ENCODE measurements at regions of chr18 and their contacts with region 1.

Region 1: GRCh38 chr18:32271672-32272208 is 81.9 kb downstream of the MEP1B start:
- DNase-seq: peak; percentile 38
- H3K4me3 ChIP-seq: no peak overlapping the region
- H3K27ac ChIP-seq: no peak overlapping the region
- H3K4me1 ChIP-seq: no peaks in the 10 kb centered on the region
- H3K27me3 ChIP-seq: peaks cover 0 to 1% of the 10 kb centered on the region in 2 experiments
- CTCF ChIP-seq: peak; percentile 43 to 62
- POLR2A ChIP-seq: no peak

Region 2: GRCh38 chr18:32158108-32158624 is 113.6 kb before region 1 on chr18:
- CTCF ChIA-PET with region 1: interaction called, 25 read pairs
- POLR2A ChIA-PET with region 1: no interaction called
- dilution Hi-C with region 1: no loop called
- intact Hi-C with region 1: loop called (anchors 1 kb)
- DNase-seq: peak; percentile 83
- H3K4me3 ChIP-seq: no peak overlapping the region
- H3K27ac ChIP-seq: no peak overlapping the region
- H3K4me1 ChIP-seq: no peaks in the 10 kb centered on the region
- H3K27me3 ChIP-seq: peaks cover 0 to 4% of the 10 kb centered on the region in 2 experiments
- CTCF ChIP-seq: peak; percentile 78 to 85
- POLR2A ChIP-seq: no peak

Region 3: GRCh38 chr18:32289483-32290075 is 17.8 kb after region 1 on chr18:
- CTCF ChIA-PET with region 1: interaction called, 15 read pairs
- POLR2A ChIA-PET with region 1: no interaction called
- dilution Hi-C with region 1: no loop called
- intact Hi-C with region 1: no loop called
- DNase-seq: peak; percentile 77
- H3K4me3 ChIP-seq: no peak overlapping the region
- H3K27ac ChIP-seq: no peak overlapping the region
- H3K4me1 ChIP-seq: no peaks in the 10 kb centered on the region
- H3K27me3 ChIP-seq: peaks cover 2 to 8% of the 10 kb centered on the region in 2 experiments
- CTCF ChIP-seq: peak; percentile 66 to 74
- POLR2A ChIP-seq: no peak

Region 4: GRCh38 chr18:32308493-32309120 is 36.9 kb after region 1 on chr18:
- CTCF ChIA-PET with region 1: interaction called, 10 read pairs
- POLR2A ChIA-PET with region 1: no interaction called
- dilution Hi-C with region 1: no loop called
- intact Hi-C with region 1: no loop called
- DNase-seq: peak; percentile 81
- H3K4me3 ChIP-seq: no peak overlapping the region
- H3K27ac ChIP-seq: no peak overlapping the region
- H3K4me1 ChIP-seq: peaks cover 7% of the 10 kb centered on the region
- H3K27me3 ChIP-seq: peaks cover 0 to 2% of the 10 kb centered on the region in 2 experiments
- CTCF ChIP-seq: no peak
- POLR2A ChIP-seq: no peak

Region 5: GRCh38 chr18:32545631-32546030 is 273.9 kb after region 1 on chr18:
- CTCF ChIA-PET with region 1: interaction called, 288 read pairs
- POLR2A ChIA-PET with region 1: no interaction called
- dilution Hi-C with region 1: no loop called
- intact Hi-C with region 1: loop called (anchors 1 kb)
- DNase-seq: no peak
- H3K4me3 ChIP-seq: no peak overlapping the region
- H3K27ac ChIP-seq: no peak overlapping the region
- H3K4me1 ChIP-seq: no peaks in the 10 kb centered on the region
- H3K27me3 ChIP-seq: peaks cover 1 to 4% of the 10 kb centered on the region in 2 experiments
- CTCF ChIP-seq: no peak
- POLR2A ChIP-seq: no peak

Region 6: DNA sequence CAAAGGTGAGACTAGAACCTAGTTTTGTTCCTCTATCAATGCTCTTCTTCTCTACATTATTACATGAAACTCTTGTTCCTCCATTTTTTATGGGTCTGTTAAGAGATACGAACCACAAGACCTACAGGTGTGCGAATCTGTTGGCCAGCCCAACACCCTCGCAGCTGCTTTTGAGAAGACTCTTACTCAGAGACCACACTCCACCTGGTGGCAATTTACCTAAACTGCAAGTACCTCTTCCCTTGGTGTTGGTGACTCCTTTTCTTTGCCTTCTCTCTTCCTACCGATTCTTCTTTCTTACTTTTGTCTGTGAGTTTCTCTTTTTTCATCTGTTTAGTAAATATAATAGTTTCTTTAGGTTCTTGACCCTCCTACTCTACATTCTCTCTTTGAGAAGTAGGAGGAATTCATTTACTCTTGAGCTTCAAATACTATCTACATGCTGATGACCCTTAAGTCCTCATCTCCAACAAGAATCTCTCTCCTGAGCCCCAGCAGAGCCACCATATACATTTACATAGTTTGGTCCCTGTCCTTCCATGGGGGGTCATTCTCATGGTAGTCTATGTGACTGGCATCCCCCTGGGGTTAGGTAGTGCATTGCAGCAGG is 280.8 kb after region 1 on chr18:
- CTCF ChIA-PET with region 1: interaction called, 288 read pairs
- POLR2A ChIA-PET with region 1: no interaction called
- dilution Hi-C with region 1: no loop called
- intact Hi-C with region 1: loop called (anchors 1 kb)
- DNase-seq: peak; percentile 62
- H3K4me3 ChIP-seq: no peak overlapping the region
- H3K27ac ChIP-seq: no peak overlapping the region
- H3K4me1 ChIP-seq: no peaks in the 10 kb centered on the region
- H3K27me3 ChIP-seq: peaks cover 2 to 5% of the 10 kb centered on the region in 2 experiments
- CTCF ChIP-seq: peak; percentile 53 to 77
- POLR2A ChIP-seq: no peak

Region 7: DNA sequence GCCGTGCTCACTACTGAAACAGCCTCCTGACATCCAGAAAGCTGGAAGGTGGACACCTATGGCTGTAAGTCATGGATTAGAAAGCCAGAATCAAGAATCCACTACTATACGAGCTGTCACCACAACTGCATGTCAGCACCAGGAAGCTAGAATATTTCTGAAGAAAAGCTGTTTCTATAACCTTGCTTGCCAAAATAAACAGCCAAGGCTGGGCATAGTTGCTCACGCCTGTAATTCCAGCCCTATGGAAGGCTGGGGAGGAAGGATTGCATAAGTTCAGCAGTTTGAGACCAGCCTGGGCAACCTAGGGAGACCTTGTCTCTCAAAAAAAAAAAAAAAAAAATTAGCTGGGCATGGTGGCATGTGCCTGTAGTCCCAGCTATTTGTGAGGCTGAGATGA is 295.2 kb after region 1 on chr18:
- CTCF ChIA-PET with region 1: interaction called, 10 read pairs
- POLR2A ChIA-PET with region 1: no interaction called
- dilution Hi-C with region 1: no loop called
- intact Hi-C with region 1: no loop called
- DNase-seq: no peak
- H3K4me3 ChIP-seq: no peak overlapping the region
- H3K27ac ChIP-seq: no peak overlapping the region
- H3K4me1 ChIP-seq: no peaks in the 10 kb centered on the region
- H3K27me3 ChIP-seq: no peaks in the 10 kb centered on the region
- CTCF ChIP-seq: no peak
- POLR2A ChIP-seq: no peak